ENCODE measurements at regions of chr16 and their contacts with region 1.

Region 1: DNA sequence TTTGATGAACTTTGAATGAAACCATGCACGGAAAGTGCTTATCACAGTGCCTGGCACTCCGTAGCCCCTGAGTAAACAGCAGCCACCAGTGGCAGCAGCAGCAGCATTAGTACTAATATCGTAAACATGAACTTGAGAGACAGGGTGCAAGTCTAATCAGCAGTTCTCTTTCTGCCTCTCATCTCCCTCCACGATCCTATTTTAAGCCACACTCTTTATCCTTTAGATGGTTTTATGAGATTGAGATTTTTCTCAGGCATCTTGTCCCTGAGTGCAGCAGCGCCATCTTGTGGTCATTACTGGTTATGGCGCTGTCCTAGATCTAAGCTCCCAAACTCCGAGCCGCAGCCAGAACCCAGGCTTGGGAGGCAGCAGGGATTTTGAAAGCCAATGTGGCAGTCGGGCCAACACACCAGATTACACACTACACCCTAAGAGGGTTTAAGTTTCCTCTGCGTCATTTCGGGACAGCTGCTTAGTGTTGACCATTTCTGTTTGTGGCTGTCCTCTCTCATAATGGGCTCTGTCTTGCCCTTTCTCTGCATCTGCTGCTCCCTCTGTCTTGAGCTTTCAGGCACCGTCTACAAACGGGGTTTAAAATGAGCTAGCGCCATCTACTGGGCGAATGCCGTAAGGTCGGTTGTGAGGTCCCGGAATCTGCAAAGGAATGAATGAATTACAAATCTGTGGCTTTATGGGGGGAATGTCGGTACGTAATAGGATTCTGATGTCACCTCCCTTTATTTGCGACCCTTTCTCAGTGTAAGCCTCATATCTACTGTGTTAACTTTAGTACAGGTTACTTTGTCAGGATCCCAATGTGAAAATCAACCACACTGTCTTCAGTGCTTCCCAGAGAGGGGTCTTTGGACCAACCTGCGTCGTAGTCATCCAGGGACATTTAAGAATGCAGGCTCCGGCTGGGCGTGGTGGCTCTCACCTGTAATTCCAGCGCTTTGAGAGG is 64.5 kb downstream of the CYLD start:
- DNase-seq: peak; percentile 94
- H3K4me3 Mint-ChIP-seq: peak overlapping the region; percentile 74
- H3K27ac Mint-ChIP-seq: peak overlapping the region; percentile 51
- H3K4me1 Mint-ChIP-seq: peaks cover 10% of the 10 kb centered on the region
- H3K27me3 Mint-ChIP-seq: no peaks in the 10 kb centered on the region

Region 2: GRCh38 chr16:50210266-50211038 is 595.9 kb before region 1 on chr16:
- CTCF ChIA-PET with region 1: interaction called, 3 read pairs
- intact Hi-C with region 1: loop called (anchors 1 kb)
- DNase-seq: peak; percentile 88
- H3K4me3 Mint-ChIP-seq: no peak overlapping the region
- H3K27ac Mint-ChIP-seq: peak overlapping the region; percentile 59
- H3K4me1 Mint-ChIP-seq: peaks cover 32% of the 10 kb centered on the region
- H3K27me3 Mint-ChIP-seq: no peaks in the 10 kb centered on the region

Region 3: GRCh38 chr16:50368410-50369132 is 437.8 kb before region 1 on chr16 and contains the start of gene BRD7:
- CTCF ChIA-PET with region 1: interaction called, 14 read pairs
- intact Hi-C with region 1: loop called (anchors 1 kb)
- DNase-seq: peak; percentile 62
- H3K4me3 Mint-ChIP-seq: peak within 1 kb of the TSS; percentile 96
- H3K27ac Mint-ChIP-seq: peak within 1 kb of the TSS; percentile 86
- H3K4me1 Mint-ChIP-seq: peaks cover 46% of the 10 kb centered on the region
- H3K27me3 Mint-ChIP-seq: no peaks in the 10 kb centered on the region
- total RNA-seq, gene BRD7: 96.7 to 101 TPM

Region 4: DNA sequence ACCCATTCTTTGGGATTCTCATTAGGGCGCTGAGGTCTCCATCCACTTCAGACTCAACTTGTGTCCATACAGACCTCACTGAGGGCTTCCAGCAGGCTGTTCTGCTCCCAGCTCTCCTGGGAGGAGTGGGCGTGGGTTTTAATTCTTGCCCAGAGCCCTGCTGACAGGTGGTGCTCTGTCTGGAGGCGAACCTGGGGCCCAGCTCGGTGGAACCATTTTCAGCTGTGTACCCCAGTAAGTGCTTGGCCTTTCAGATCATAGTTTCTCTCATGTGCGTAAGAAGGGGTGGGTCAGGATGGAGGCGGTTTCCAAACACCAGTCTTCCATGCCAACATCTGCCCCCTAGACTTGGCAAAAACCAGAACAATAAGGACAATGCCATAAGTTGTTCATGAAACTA is 279.6 kb before region 1 on chr16:
- CTCF ChIA-PET with region 1: no interaction called
- intact Hi-C with region 1: no loop called
- DNase-seq: no peak
- H3K4me3 Mint-ChIP-seq: no peak overlapping the region
- H3K27ac Mint-ChIP-seq: no peak overlapping the region
- H3K4me1 Mint-ChIP-seq: no peaks in the 10 kb centered on the region
- H3K27me3 Mint-ChIP-seq: no peaks in the 10 kb centered on the region

Region 5: GRCh38 chr16:50585331-50585776 is 221.0 kb before region 1 on chr16:
- CTCF ChIA-PET with region 1: interaction called, 3 read pairs
- intact Hi-C with region 1: loop called (anchors 2 kb)
- DNase-seq: no peak
- H3K4me3 Mint-ChIP-seq: no peak overlapping the region
- H3K27ac Mint-ChIP-seq: no peak overlapping the region
- H3K4me1 Mint-ChIP-seq: peaks cover 34% of the 10 kb centered on the region
- H3K27me3 Mint-ChIP-seq: no peaks in the 10 kb centered on the region

Region 6: GRCh38 chr16:50719518-50720337 is 86.7 kb before region 1 on chr16:
- CTCF ChIA-PET with region 1: interaction called, 6 read pairs
- intact Hi-C with region 1: loop called (anchors 1 kb)
- DNase-seq: peak; percentile 50
- H3K4me3 Mint-ChIP-seq: no peak overlapping the region
- H3K27ac Mint-ChIP-seq: no peak overlapping the region
- H3K4me1 Mint-ChIP-seq: peaks cover 35% of the 10 kb centered on the region
- H3K27me3 Mint-ChIP-seq: no peaks in the 10 kb centered on the region

Region 7: GRCh38 chr16:50765260-50765659 is 41.1 kb before region 1 on chr16:
- CTCF ChIA-PET with region 1: interaction called, 11 read pairs
- intact Hi-C with region 1: loop called (anchors 1 kb)
- DNase-seq: peak; percentile 23
- H3K4me3 Mint-ChIP-seq: peak overlapping the region; percentile 14
- H3K27ac Mint-ChIP-seq: peak overlapping the region; percentile 79
- H3K4me1 Mint-ChIP-seq: peaks cover 89% of the 10 kb centered on the region
- H3K27me3 Mint-ChIP-seq: no peaks in the 10 kb centered on the region

Region 8: GRCh38 chr16:50844840-50845239 is 38.5 kb after region 1 on chr16:
- CTCF ChIA-PET with region 1: no interaction called
- intact Hi-C with region 1: no loop called
- DNase-seq: no peak
- H3K4me3 Mint-ChIP-seq: no peak overlapping the region
- H3K27ac Mint-ChIP-seq: no peak overlapping the region
- H3K4me1 Mint-ChIP-seq: peaks cover 13% of the 10 kb centered on the region
- H3K27me3 Mint-ChIP-seq: peaks cover 4% of the 10 kb centered on the region

Measured in activated naive CD4-positive, alpha-beta T cell treated with anti-CD3 and anti-CD28 coated beads for 36 hours (primary cell).